Astrocyte of the cerebellum (primary cell): ENCODE measurements at regions of chr7 and their contacts with region 1.

Region 1: GRCh38 chr7:93249491-93250148 is 17.5 kb downstream of the VPS50 start:
- DNase-seq: peak; percentile 12
- H3K4me3 ChIP-seq: no peak overlapping the region
- CTCF ChIP-seq: no peak

Region 2: GRCh38 chr7:93551063-93551904 is 301.7 kb after region 1 on chr7:
- in situ Hi-C with region 1: loop called (anchors 5 kb)
- DNase-seq: peak; percentile 39
- H3K4me3 ChIP-seq: no peak overlapping the region
- CTCF ChIP-seq: peak; percentile 61